ENCODE measurements at regions of chr11 and their contacts with region 1.

Region 1: GRCh38 chr11:29260939-29261705 is 755.7 kb downstream of the KCNA4 start:
- DNase-seq: peak; percentile 83
- H3K4me3 Mint-ChIP-seq: no peak overlapping the region
- H3K27ac Mint-ChIP-seq: peak overlapping the region; percentile 85
- H3K4me1 Mint-ChIP-seq: peaks cover 18% of the 10 kb centered on the region
- H3K27me3 Mint-ChIP-seq: no peaks in the 10 kb centered on the region
- CTCF ChIP-seq: no peak

Region 2: DNA sequence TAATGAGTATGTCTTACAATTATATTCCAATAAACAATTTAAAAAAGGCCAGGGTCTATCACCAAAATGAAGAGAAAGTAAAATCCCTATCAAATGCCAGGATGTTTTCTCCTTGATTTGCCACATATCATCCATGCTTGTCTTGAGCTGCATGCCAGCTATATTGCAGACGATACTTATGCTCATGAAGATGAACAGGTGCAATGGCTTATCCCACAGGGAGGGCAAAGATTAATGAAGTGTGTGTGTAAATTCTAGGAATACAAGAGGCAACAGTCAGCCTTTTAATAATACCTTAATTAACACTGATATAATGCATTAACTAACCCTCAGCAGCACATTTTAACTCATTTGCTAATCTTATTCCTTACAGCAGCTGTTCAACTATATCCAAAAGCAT is 94.8 kb before region 1 on chr11:
- CTCF ChIA-PET with region 1: no interaction called
- POLR2A ChIA-PET with region 1: no interaction called
- intact Hi-C with region 1: no loop called
- DNase-seq: no peak
- H3K4me3 Mint-ChIP-seq: no peak overlapping the region
- H3K27ac Mint-ChIP-seq: no peak overlapping the region
- H3K4me1 Mint-ChIP-seq: peaks cover 6% of the 10 kb centered on the region
- H3K27me3 Mint-ChIP-seq: no peaks in the 10 kb centered on the region
- CTCF ChIP-seq: no peak

Region 3: DNA sequence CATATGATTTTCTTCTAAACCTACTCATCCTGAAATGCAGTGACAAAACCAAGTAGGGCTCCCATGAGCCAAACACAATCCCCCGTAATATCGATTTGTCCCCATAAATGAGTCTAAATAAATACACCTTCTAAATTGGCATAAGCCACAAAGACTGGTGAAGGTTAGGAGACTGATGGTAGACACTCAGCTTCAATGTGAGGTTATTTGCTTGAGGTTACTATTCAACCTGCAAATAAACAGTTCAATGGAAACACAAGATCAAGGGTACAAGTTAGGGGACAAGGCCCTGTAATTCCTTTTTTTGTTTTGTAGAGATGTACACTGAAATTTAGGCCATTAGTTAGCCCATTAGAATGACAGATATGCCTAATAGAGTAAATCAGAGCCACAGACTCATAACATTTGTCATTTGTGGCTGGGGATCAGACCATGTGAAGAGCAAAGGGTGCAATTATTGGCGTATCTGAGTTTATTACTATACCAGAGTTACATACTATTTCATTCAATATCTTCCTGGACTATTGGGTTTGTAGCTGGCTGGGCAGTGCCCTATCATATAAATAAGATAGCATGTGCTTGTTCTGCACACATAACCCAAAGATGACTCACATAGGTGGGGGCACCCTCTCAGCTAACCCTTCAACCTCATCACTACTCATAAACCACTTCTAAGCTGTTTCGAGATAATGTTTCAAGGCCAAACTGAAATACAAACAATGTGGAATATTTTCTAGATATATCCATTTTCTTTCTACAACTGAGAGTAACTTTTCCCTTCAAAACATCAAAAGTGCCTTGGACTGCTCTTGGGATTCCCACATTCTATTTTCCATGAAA is 60.4 kb after region 1 on chr11:
- CTCF ChIA-PET with region 1: interaction called, 11 read pairs
- POLR2A ChIA-PET with region 1: interaction called, 3 read pairs
- intact Hi-C with region 1: no loop called
- DNase-seq: peak; percentile 23
- H3K4me3 Mint-ChIP-seq: no peak overlapping the region
- H3K27ac Mint-ChIP-seq: peak overlapping the region; percentile 11
- H3K4me1 Mint-ChIP-seq: peaks cover 13% of the 10 kb centered on the region
- H3K27me3 Mint-ChIP-seq: no peaks in the 10 kb centered on the region
- CTCF ChIP-seq: no peak